Dendritic cell treated with granulocyte-macrophage colony-stimulating factor and Interleukin-4, amounts not matched to agents 40 ng/mL and 50 ng/mL, for 4 days (primary cell): ENCODE measurements at regions of chr18 and their contacts with region 1.

Region 1: GRCh38 chr18:33146014-33146413 is 294.5 kb downstream of the CCDC178 start:
- H3K4me3 Mint-ChIP-seq: peak overlapping the region; percentile 44
- H3K27ac Mint-ChIP-seq: peak overlapping the region; percentile 92
- H3K4me1 Mint-ChIP-seq: peaks cover 20% of the 10 kb centered on the region
- H3K27me3 Mint-ChIP-seq: no peaks in the 10 kb centered on the region

Region 2: GRCh38 chr18:33184958-33185357 is 38.9 kb after region 1 on chr18:
- intact Hi-C with region 1: loop called (anchors 5 kb)
- H3K4me3 Mint-ChIP-seq: no peak overlapping the region
- H3K27ac Mint-ChIP-seq: no peak overlapping the region
- H3K4me1 Mint-ChIP-seq: peaks cover 7% of the 10 kb centered on the region
- H3K27me3 Mint-ChIP-seq: no peaks in the 10 kb centered on the region

Region 3: DNA sequence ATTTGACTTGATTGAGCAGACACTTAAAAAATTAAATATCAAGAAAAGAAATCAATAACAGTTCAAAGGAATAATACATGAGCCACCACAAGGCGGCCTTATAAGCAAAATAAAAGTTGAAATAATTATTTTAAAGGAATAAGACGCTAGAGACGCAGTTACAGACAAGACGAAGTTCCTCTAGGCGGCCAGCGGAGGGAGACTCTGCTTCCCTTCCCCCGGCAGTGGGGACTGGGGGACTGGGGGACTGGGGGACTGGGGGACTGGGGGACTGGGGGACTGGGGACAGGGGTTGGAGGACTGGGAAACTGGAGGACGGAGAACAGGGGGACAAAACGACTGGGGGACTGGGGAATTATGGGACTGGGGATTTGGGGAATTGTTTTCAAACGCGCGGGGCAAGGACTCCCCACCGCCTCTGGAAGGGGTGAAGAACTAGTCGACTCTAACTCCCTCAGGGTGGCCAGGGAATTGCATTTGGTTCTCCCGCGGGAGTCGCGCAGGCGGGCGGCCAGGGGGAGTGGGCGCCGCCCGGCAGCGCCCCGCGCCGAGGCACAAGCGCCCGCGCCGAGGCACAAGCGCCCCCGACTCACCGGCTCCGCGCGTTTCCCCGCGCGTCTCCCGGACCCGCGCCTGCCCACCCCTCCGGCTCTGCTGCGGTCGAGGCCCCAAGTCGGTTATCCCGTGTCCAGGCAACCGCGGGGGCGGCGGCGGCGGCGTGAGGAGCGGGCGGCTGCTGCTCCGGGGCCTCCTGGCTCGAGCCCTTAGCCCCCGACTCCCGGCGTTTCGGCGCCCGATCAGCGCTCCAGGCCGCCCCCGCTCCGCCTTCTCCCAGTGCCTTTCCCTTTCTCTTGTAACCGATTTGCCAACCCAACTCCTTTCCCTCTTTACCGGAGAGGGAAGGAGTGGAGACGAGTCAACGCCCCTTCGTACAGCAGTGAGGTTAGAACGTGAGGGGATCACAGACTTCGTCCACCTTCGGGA is 294.3 kb after region 1 on chr18 and contains the start of gene CCDC178:
- intact Hi-C with region 1: no loop called
- H3K4me3 Mint-ChIP-seq: no peak within 1 kb of the TSS
- H3K27ac Mint-ChIP-seq: no peak within 1 kb of the TSS
- H3K4me1 Mint-ChIP-seq: no peaks in the 10 kb centered on the region
- H3K27me3 Mint-ChIP-seq: peaks cover 29% of the 10 kb centered on the region